Heart right ventricle (tissue), 16 donors: ENCODE measurements at regions of chr3 and their contacts with region 1.

Region 1: GRCh38 chr3:178583963-178584575 is 47.8 kb downstream of the KCNMB2 start:
- DNase-seq: no peak
- ATAC-seq: peak in 5 of 8 donors; percentile 24 to 65 (median 54)
- H3K4me3 ChIP-seq: no peak overlapping the region
- H3K27ac ChIP-seq: peak overlapping the region in 2 of 10 donors; percentile 24 to 31
- H3K4me1 ChIP-seq: peaks cover 0 to 27% (median 6%) of the 10 kb centered on the region in 9 donors
- H3K27me3 ChIP-seq: no peaks in the 10 kb centered on the region
- CTCF ChIP-seq: no peak

Region 2: DNA sequence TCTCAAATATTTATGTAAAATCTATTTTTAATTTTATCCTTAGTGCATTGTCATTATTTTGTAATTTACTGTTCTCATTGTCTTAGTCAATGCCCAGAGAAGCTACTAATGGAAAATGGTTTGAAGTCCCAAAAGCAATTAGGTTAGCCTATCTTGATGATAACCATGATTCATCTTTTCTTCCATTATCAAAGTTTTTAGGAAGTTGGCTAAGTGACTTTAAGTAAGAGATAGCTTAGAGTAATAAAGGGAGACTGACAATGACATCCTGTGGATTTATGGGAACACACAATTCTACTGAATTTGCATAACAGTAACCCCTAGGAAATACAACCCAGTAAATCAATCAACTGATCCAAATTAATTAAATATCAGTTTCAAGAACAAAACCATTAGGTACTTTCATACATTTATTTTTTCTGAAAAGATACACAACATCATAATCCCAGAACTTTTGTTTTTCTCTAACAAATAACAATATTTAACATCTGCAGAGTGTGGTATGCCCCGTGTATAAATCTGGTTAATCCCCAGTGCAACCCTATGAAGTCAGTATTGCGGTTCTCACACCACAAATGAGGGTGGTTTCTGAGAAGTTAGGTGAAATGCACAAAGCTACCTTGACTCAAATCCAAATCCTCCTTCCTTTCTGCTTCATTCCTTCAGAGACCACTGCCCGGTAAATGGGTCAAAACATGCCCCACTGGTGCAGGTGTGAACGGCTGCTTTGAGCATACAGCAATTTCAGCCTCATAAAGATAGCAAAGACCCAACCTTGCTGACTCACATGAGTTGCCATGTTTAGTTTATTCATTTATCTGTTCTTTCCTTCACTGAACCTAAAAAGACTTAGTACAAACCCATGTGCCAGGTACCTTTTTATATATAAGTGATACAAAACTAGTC is 1588.9 kb before region 1 on chr3:
- intact Hi-C with region 1: loop called in 1 of 10 experiments (anchors 5 kb)
- DNase-seq: no peak
- ATAC-seq: no peak
- H3K4me3 ChIP-seq: no peak overlapping the region
- H3K27ac ChIP-seq: no peak overlapping the region
- H3K4me1 ChIP-seq: no peaks in the 10 kb centered on the region
- H3K27me3 ChIP-seq: no peaks in the 10 kb centered on the region
- CTCF ChIP-seq: no peak

Region 3: GRCh38 chr3:178343433-178344038 is 240.5 kb before region 1 on chr3:
- intact Hi-C with region 1: no loop called
- DNase-seq: no peak
- ATAC-seq: peak in 1 of 8 donors; percentile 22
- H3K4me3 ChIP-seq: no peak overlapping the region
- H3K27ac ChIP-seq: no peak overlapping the region
- H3K4me1 ChIP-seq: peaks cover 0 to 14% (median 0%) of the 10 kb centered on the region in 9 donors
- H3K27me3 ChIP-seq: no peaks in the 10 kb centered on the region
- CTCF ChIP-seq: no peak